Activated naive CD8-positive, alpha-beta T cell treated with anti-CD3 and anti-CD28 coated beads, Interleukin-2, amount 10 ng/mL, durations not matched to agents 7 days and 5 days (primary cell): ENCODE measurements at regions of chr17 and their contacts with region 1.

Region 1: DNA sequence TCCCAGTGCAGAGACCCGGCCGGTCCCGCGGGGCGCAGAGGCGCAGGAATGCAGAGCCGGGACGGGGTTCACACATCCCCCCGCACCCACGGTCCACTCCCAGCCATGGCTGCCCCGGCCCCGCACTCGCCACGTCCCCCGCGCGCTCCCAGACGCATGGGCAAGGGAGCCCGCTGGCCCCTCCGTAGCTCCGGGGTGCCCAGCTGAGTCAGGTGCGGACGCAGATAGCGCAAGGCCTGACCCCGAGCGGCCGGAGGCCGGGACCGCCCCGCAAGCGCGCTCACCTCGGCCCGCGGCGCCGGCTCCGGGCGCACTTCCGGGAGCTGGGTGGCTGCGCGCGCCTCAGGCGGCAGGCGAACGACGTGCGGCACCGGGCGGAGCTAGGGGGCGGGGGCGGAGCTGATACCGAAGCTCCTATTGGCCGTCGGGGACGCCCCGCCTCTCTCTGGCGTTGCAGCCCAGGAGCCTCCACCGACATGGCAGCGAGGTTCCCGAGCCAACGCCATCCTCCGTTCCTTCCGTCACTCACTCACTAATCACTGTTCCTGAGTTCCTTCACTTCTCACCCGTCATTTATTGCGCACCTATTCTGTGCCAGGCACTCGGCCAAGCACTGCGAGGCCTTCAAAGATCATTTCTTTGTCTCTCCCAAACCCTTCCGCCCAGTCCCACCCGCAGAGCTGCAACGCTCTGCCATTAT is at the start of gene ZNF18:
- DNase-seq: peak; percentile 96
- ATAC-seq: peak; percentile 98
- H3K4me3 Mint-ChIP-seq: peak within 1 kb of the TSS; percentile 100
- H3K27ac Mint-ChIP-seq: peak within 1 kb of the TSS; percentile 99
- H3K4me1 Mint-ChIP-seq: peaks cover 18% of the 10 kb centered on the region
- H3K27me3 Mint-ChIP-seq: peaks cover 4% of the 10 kb centered on the region
- total RNA-seq, gene ZNF18: 16.3 to 18.1 TPM

Region 2: GRCh38 chr17:11909348-11909747 is 87.9 kb before region 1 on chr17:
- POLR2A ChIA-PET with region 1: no interaction called
- DNase-seq: no peak
- ATAC-seq: no peak
- H3K4me3 Mint-ChIP-seq: no peak overlapping the region
- H3K27ac Mint-ChIP-seq: no peak overlapping the region
- H3K4me1 Mint-ChIP-seq: no peaks in the 10 kb centered on the region
- H3K27me3 Mint-ChIP-seq: no peaks in the 10 kb centered on the region

Region 3: GRCh38 chr17:11969565-11969964 is 27.7 kb before region 1 on chr17:
- POLR2A ChIA-PET with region 1: no interaction called
- DNase-seq: no peak
- ATAC-seq: no peak
- H3K4me3 Mint-ChIP-seq: no peak overlapping the region
- H3K27ac Mint-ChIP-seq: no peak overlapping the region
- H3K4me1 Mint-ChIP-seq: no peaks in the 10 kb centered on the region
- H3K27me3 Mint-ChIP-seq: no peaks in the 10 kb centered on the region

Region 4: DNA sequence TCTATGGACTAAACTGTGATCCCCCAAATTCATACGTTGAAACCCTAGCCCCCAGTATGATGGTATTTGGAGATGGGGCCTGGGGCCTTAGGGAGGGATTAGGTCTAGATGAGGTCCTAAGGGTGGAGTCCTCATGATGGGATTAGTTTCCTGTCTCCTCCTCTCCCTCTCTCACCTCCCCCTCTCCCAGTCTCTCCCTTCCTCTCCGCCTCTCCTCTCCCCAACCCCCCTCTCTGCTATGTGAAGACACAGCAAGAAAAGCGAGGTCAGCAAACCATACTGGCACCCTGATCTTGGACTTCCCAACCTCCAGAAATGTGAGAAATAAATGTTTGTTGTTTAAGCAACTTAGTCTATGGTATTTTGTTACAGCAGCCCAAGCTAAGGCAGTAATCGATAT is 15.4 kb before region 1 on chr17:
- POLR2A ChIA-PET with region 1: interaction called, 11 read pairs
- DNase-seq: no peak
- ATAC-seq: no peak
- H3K4me3 Mint-ChIP-seq: no peak overlapping the region
- H3K27ac Mint-ChIP-seq: no peak overlapping the region
- H3K4me1 Mint-ChIP-seq: no peaks in the 10 kb centered on the region
- H3K27me3 Mint-ChIP-seq: no peaks in the 10 kb centered on the region

Region 5: DNA sequence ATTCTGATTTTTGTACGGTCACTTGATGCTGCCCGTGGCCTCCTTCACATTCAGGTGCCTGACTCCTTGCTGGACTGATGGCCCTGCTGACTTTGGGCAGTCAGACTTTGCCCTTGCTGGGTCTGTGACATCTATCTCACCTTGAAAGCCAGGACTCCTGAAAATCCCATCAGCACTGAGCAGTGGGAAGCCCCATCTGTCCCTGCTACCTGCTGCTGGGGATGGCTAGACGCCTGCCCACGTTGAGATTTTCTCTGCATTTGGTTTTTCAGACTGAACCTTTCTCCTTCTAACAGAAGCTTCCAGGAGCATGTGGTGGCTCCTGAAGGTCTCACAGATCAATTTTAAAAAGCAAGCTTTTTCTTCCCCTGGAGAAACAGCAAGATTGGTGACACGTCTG is 10.2 kb after region 1 on chr17:
- POLR2A ChIA-PET with region 1: interaction called, 21 read pairs
- DNase-seq: no peak
- ATAC-seq: no peak
- H3K4me3 Mint-ChIP-seq: no peak overlapping the region
- H3K27ac Mint-ChIP-seq: no peak overlapping the region
- H3K4me1 Mint-ChIP-seq: peaks cover 5% of the 10 kb centered on the region
- H3K27me3 Mint-ChIP-seq: peaks cover 8% of the 10 kb centered on the region

Region 6: DNA sequence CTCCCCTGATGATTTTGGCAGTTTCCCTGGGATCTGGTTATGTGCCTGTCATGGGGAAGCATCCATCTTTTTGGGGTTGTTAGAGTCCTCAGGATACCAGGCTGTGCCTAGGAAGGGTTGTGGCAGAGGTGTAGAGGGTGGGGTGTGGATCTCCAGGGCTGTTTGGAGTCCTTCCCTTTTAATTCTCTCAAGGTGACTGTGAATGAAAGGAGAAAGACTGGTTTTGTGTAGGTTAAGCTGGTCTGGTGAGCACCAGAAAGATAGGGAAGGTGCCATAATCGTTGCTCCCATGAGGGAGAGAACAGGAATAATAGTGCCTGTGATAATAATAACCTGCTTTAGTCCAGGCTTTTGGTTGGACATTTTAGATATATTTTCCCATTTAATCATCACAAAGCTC is 30.4 kb after region 1 on chr17:
- POLR2A ChIA-PET with region 1: interaction called, 179 read pairs
- DNase-seq: no peak
- ATAC-seq: no peak
- H3K4me3 Mint-ChIP-seq: no peak overlapping the region
- H3K27ac Mint-ChIP-seq: no peak overlapping the region
- H3K4me1 Mint-ChIP-seq: peaks cover 52% of the 10 kb centered on the region
- H3K27me3 Mint-ChIP-seq: no peaks in the 10 kb centered on the region

Region 7: GRCh38 chr17:13017659-13018459 is 1020.6 kb after region 1 on chr17 and contains the start of gene ELAC2:
- POLR2A ChIA-PET with region 1: interaction called, 14 read pairs
- DNase-seq: peak; percentile 91
- ATAC-seq: peak; percentile 100
- H3K4me3 Mint-ChIP-seq: peak within 1 kb of the TSS; percentile 96
- H3K27ac Mint-ChIP-seq: peak within 1 kb of the TSS; percentile 91
- H3K4me1 Mint-ChIP-seq: peaks cover 11% of the 10 kb centered on the region
- H3K27me3 Mint-ChIP-seq: no peaks in the 10 kb centered on the region
- total RNA-seq, gene ELAC2: 57.4 to 60.2 TPM